ENCODE measurements at regions of chr7 and their contacts with region 1.

Region 1: GRCh38 chr7:35424869-35425495 is 171.1 kb upstream of the TBX20 start:
- DNase-seq: peak; percentile 43
- ATAC-seq: peak; percentile 95
- H3K4me3 ChIP-seq: no peak overlapping the region
- H3K27ac ChIP-seq: no peak overlapping the region
- H3K4me1 ChIP-seq: no peaks in the 10 kb centered on the region
- H3K27me3 ChIP-seq: peaks cover 9% of the 10 kb centered on the region; the same call in 1 of the 2 replicates
- CTCF ChIP-seq: peak; percentile 81 to 86 (median 84)
- POLR2A ChIP-seq: no peak
- RAD21 ChIP-seq: peak; percentile 73

Region 2: DNA sequence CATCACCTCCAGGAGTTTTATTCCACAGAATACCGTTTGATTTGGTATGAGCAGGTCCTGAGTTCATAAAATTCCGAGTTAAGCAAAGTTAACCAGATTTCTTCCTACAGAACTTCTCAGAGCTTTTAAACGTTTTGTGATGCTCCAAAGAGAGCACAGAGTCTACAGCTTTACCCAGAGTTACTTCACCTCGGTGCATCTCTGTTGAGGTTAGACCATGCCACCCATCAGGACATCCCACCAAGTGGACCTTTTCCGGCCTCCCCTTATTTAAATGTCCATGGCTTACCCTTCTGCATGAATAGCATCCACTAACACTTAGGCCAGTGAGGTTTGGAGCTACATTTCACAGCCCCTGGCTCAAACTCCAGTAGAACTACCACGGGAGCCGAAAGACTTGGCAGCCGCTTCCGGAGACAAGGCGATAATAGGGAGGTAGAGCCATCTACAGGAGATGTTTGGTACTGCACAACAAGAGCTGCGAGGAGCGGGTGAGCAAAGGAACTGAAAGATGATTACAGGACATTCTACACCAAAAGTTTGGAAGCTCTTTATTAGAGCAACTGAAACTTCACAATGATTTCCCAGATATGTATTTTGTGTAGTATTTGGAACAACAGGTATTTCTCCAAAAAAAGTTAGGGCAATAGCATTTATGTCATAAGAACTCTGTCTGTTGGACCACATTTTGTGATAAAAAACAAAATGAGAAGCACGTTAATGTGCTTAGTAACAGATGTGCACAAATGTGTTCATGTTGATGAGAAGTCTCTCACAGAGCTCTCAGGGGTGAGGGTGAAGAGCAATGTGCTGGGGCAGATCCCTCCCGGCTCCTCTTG is 95.2 kb after region 1 on chr7:
- CTCF ChIA-PET with region 1: interaction called, 15 read pairs
- POLR2A ChIA-PET with region 1: no interaction called
- RAD21 ChIA-PET with region 1: interaction called in 1 of 2 experiments, 3 read pairs
- intact Hi-C with region 1: loop called (anchors 1 kb)
- DNase-seq: peak; percentile 58
- ATAC-seq: peak; percentile 93
- H3K4me3 ChIP-seq: no peak overlapping the region; a peak in 1 of 4 replicates
- H3K27ac ChIP-seq: no peak overlapping the region
- H3K4me1 ChIP-seq: no peaks in the 10 kb centered on the region
- H3K27me3 ChIP-seq: peaks cover 6% of the 10 kb centered on the region; the same call in 1 of the 2 replicates
- CTCF ChIP-seq: peak; percentile 72 to 88 (median 78); a peak in 5 of 6 replicates
- POLR2A ChIP-seq: no peak
- RAD21 ChIP-seq: peak; percentile 89

Region 3: GRCh38 chr7:35537067-35538023 is 112.4 kb after region 1 on chr7:
- CTCF ChIA-PET with region 1: interaction called, 3 read pairs
- POLR2A ChIA-PET with region 1: no interaction called
- RAD21 ChIA-PET with region 1: interaction called in 1 of 2 experiments, 3 read pairs
- intact Hi-C with region 1: loop called (anchors 1 kb)
- DNase-seq: peak; percentile 53
- ATAC-seq: peak; percentile 99
- H3K4me3 ChIP-seq: peak overlapping the region; percentile 28 to 40
- H3K27ac ChIP-seq: no peak overlapping the region
- H3K4me1 ChIP-seq: peaks cover 0 to 11% of the 10 kb centered on the region in 2 experiments; a peak in 1 of 4 replicates
- H3K27me3 ChIP-seq: no peaks in the 10 kb centered on the region
- CTCF ChIP-seq: peak; percentile 78 to 92 (median 91)
- POLR2A ChIP-seq: no peak
- RAD21 ChIP-seq: peak; percentile 88

Region 4: DNA sequence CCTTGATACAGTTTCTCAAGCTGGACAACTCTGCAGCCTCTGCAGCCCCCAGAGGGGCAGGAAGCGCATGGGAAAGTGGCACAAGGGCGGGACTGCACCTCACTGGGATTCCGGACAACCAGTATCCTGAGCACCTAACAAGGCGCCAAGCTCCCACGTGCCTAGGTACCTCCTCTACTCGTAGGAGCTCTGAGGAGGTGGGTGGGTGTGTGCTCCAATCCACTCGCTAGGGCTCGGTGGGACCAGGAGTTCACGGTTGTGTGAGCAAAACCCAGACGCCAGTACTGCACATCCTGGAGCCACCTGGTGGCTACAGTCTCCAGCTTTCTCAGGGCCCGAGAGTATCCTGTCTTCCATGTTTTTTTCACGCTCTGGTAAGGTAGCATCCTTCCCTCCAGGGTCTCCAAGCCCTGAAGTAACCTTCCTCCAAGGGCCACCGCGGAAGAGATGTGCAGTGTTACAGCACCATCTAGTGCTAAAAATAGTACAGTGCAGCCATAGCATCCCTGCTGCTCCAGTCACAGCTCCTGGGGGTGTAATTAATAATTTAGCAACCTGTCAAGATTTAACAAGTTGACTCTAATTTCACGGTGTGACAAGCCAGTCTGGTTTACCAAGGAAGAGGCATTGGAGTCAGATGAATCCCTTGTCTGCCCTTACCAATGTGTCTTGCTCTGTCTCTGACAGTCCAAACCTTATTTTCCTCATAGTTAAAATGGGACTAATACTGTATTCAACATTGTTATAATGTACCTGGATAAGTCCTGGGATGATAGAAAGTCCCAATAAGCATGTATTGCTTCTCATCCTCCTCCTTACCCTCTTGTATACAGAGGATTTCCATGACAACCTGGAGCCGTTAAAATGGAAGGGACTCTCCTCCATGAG is 199.6 kb after region 1 on chr7:
- CTCF ChIA-PET with region 1: interaction called, 5 read pairs
- POLR2A ChIA-PET with region 1: no interaction called
- RAD21 ChIA-PET with region 1: no interaction called
- intact Hi-C with region 1: loop called (anchors 1 kb)
- DNase-seq: peak; percentile 23
- ATAC-seq: peak; percentile 91
- H3K4me3 ChIP-seq: no peak overlapping the region
- H3K27ac ChIP-seq: no peak overlapping the region
- H3K4me1 ChIP-seq: no peaks in the 10 kb centered on the region
- H3K27me3 ChIP-seq: no peaks in the 10 kb centered on the region
- CTCF ChIP-seq: peak; percentile 63 to 94 (median 80); a peak in 5 of 6 replicates
- POLR2A ChIP-seq: no peak
- RAD21 ChIP-seq: peak; percentile 86